Endothelial cell of umbilical vein (primary cell): ENCODE measurements at regions of chr16 and their contacts with region 1.

Region 1: DNA sequence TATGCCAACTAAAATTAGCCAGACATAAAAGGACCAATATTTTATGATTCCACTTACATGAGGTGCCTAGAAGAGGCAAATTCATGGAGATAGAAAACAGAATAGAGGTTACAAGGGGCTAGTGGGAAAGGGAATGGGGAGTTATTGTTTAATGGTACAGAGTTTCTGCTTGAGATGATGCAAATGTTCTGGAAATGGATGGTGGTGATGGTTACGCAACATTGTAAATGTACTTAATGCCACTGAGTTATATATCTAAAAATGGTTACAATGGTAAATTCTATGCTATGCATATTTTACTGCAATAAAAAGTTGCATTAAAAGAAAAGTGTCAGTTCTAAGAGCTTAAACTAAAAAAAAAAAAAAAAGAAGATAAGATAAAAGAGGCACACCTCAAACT is 17.9 kb downstream of the MT1X start:
- DNase-seq: no peak
- H3K4me3 ChIP-seq: no peak overlapping the region
- H3K27ac ChIP-seq: no peak overlapping the region
- H3K4me1 ChIP-seq: no peaks in the 10 kb centered on the region
- H3K27me3 ChIP-seq: no peaks in the 10 kb centered on the region
- CTCF ChIP-seq: no peak
- POLR2A ChIP-seq: no peak

Region 2: GRCh38 chr16:56506941-56507340 is 193.3 kb before region 1 on chr16:
- CTCF ChIA-PET with region 1: interaction called, 54 read pairs
- POLR2A ChIA-PET with region 1: no interaction called
- dilution Hi-C with region 1: no loop called
- intact Hi-C with region 1: no loop called
- DNase-seq: peak; percentile 92
- H3K4me3 ChIP-seq: no peak overlapping the region
- H3K27ac ChIP-seq: peak overlapping the region; percentile 83
- H3K4me1 ChIP-seq: peaks cover 12% of the 10 kb centered on the region
- H3K27me3 ChIP-seq: no peaks in the 10 kb centered on the region
- CTCF ChIP-seq: no peak
- POLR2A ChIP-seq: no peak

Region 3: GRCh38 chr16:56576585-56577293 is 123.5 kb before region 1 on chr16:
- CTCF ChIA-PET with region 1: interaction called, 142 read pairs
- POLR2A ChIA-PET with region 1: no interaction called
- dilution Hi-C with region 1: no loop called
- intact Hi-C with region 1: loop called (anchors 1 kb)
- DNase-seq: peak; percentile 64
- H3K4me3 ChIP-seq: no peak overlapping the region
- H3K27ac ChIP-seq: no peak overlapping the region
- H3K4me1 ChIP-seq: no peaks in the 10 kb centered on the region
- H3K27me3 ChIP-seq: peaks cover 0 to 9% of the 10 kb centered on the region in 2 experiments
- CTCF ChIP-seq: peak; percentile 86 to 91
- POLR2A ChIP-seq: no peak

Region 4: DNA sequence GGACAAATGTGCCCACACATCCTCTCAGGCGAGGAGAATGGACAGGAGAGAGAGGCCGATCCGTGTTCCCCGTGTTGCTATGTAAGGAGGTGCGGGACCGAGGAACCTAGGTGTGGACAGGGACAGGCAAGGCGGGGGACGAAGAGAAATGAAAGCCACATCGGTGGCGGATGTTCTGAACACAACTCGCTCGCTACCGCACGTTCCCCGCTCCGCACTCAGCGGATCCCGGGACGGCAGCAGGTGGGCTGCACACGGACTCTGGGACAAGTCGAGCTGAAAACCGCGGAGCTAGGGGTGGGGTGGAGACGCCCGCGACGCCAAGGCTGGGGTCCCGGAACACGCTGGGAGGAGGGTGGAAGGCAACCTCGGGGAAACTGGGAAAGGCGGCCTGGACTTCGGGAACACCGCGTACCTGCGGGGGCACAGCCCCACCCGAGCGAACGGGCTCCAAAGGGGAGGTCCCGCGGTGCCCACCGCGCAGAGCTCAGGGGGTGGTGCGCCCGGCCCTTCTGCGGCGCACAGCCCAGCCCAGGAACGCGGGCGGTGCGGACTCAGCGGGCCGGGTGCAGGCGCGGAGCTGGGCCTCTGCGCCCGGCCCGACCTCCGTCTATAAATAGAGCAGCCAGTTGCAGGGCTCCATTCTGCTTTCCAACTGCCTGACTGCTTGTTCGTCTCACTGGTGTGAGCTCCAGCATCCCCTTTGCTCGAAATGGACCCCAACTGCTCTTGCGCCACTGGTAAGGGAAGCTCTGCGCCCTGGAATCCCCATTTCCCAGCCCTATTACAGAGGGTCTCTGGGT is 74.9 kb before region 1 on chr16 and contains the start of gene MT1E:
- CTCF ChIA-PET with region 1: interaction called, 11 read pairs
- POLR2A ChIA-PET with region 1: interaction called, 3 read pairs
- dilution Hi-C with region 1: no loop called
- intact Hi-C with region 1: no loop called
- DNase-seq: peak; percentile 54
- H3K4me3 ChIP-seq: peak within 1 kb of the TSS; percentile 21 to 74 (median 64)
- H3K27ac ChIP-seq: peak within 1 kb of the TSS; percentile 61
- H3K4me1 ChIP-seq: peaks cover 12% of the 10 kb centered on the region
- H3K27me3 ChIP-seq: no peaks in the 10 kb centered on the region
- CTCF ChIP-seq: no peak
- POLR2A ChIP-seq: peak; percentile 99
- total RNA-seq, gene MT1E: 201 and 346 TPM in 2 replicates

Region 5: DNA sequence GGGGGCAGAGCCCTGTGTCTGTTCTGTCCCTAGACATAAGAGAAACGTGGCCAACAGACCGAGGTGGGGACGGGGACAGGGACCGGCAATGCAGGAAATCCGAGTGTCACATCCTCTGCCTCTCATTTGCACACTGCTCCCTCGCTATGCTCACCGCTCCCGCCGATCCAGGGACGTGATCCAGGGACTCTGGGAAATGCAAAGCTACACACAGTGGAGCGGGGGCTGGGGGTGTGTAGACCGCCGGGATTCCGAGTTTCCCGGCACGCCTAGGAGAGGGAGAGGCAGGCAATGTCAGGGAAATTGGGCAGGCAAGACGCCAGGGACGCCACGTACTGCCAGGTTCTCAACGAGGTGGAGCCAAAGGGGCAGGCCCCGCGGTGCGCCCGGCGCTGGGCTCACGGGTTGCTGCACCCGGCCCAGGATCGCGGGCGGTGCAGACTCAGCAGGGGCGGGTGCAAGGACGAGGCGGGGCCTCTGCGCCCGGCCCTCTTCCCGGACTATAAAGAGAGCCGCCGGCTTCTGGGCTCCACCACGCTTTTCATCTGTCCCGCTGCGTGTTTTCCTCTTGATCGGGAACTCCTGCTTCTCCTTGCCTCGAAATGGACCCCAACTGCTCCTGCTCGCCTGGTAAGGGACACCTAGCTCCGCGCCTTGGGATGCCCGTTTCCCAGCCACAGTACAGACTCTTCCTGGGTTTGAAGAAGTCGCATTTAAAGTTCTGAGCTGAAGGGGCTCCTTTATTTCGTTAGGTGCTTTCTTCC is 18.1 kb before region 1 on chr16 and contains the start of gene MT1X:
- CTCF ChIA-PET with region 1: interaction called, 22 read pairs
- POLR2A ChIA-PET with region 1: no interaction called
- dilution Hi-C with region 1: no loop called
- intact Hi-C with region 1: no loop called
- DNase-seq: peak; percentile 75
- H3K4me3 ChIP-seq: peak within 1 kb of the TSS; percentile 25 to 63 (median 37)
- H3K27ac ChIP-seq: peak within 1 kb of the TSS; percentile 19
- H3K4me1 ChIP-seq: peaks cover 10% of the 10 kb centered on the region
- H3K27me3 ChIP-seq: peaks cover 0 to 3% of the 10 kb centered on the region in 2 experiments
- CTCF ChIP-seq: no peak
- POLR2A ChIP-seq: peak; percentile 95
- total RNA-seq, gene MT1X: 15.6 and 19.2 TPM in 2 replicates

Region 6: DNA sequence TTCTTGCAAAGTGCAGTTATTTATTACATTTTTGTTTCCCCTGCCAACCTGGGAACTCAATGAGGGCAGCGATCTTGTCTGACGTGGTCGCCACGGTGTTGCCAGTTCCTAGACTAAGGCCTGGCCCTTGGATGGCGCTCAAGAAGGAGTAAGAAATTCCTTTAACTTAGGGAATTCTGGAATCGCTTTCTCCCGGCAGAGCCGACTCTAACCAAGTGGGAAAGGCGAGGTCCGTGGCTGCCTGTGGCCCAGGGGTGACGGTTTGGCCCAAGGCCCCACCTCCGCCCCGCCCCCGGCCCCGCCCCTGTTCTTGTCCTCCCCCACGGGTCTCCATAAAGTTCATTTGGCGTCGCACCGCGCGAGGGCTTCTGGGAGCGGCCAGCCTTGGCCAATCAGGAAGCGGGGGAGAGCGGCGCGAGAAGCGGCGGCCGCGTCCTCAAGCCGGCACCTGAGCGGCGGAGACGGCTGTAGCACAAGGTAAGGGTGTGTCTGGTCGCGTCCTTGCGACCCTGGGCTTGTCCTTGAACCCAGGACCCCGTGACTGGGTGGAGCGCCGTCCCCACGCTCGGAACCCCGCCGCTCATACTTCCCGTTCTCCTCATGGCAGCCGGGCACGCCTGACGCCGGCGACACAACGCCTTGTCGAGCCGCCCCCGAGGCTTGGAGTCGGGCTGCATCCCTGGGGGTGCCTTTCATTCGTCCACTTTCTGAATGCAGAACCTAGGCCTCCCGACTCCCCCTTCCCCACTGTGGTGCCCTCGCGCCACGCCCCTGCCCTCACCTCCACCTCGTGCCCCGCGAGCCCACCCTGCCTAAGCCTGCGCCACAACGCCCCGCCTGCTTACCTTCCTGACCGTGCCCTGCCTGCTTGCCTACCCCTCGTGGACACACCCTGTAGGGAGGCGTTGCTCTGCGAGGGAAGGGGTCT is 29.8 kb after region 1 on chr16 and contains the start of gene NUP93:
- CTCF ChIA-PET with region 1: no interaction called
- POLR2A ChIA-PET with region 1: no interaction called
- dilution Hi-C with region 1: no loop called
- intact Hi-C with region 1: no loop called
- DNase-seq: peak; percentile 92
- H3K4me3 ChIP-seq: peak within 1 kb of the TSS; percentile 48 to 91 (median 70)
- H3K27ac ChIP-seq: peak within 1 kb of the TSS; percentile 65
- H3K4me1 ChIP-seq: peaks cover 21% of the 10 kb centered on the region
- H3K27me3 ChIP-seq: no peaks in the 10 kb centered on the region
- CTCF ChIP-seq: no peak
- POLR2A ChIP-seq: peak; percentile 77
- total RNA-seq, gene NUP93: 111 and 124 TPM in 2 replicates

Region 7: GRCh38 chr16:56866943-56867830 is 167.0 kb after region 1 on chr16:
- CTCF ChIA-PET with region 1: no interaction called
- POLR2A ChIA-PET with region 1: no interaction called
- dilution Hi-C with region 1: no loop called
- intact Hi-C with region 1: no loop called
- DNase-seq: peak; percentile 57
- H3K4me3 ChIP-seq: no peak overlapping the region
- H3K27ac ChIP-seq: no peak overlapping the region
- H3K4me1 ChIP-seq: no peaks in the 10 kb centered on the region
- H3K27me3 ChIP-seq: no peaks in the 10 kb centered on the region
- CTCF ChIP-seq: peak; percentile 55 to 56
- POLR2A ChIP-seq: no peak